PC-3 (cell line): ENCODE measurements at regions of chr16 and their contacts with region 1.

Region 1: GRCh38 chr16:65117811-65118448 is 3.9 kb downstream of the CDH11 start:
- DNase-seq: peak; percentile 75
- ATAC-seq: peak; percentile 9; the same call in 1 of the 2 replicates
- H3K4me3 ChIP-seq: peak overlapping the region; percentile 90
- H3K27ac ChIP-seq: no peak overlapping the region
- H3K4me1 ChIP-seq: peaks cover 22% of the 10 kb centered on the region
- H3K27me3 ChIP-seq: no peaks in the 10 kb centered on the region
- CTCF ChIP-seq: peak; percentile 89

Region 2: GRCh38 chr16:63461248-63461841 is 1656.6 kb before region 1 on chr16:
- CTCF ChIA-PET with region 1: no interaction called
- POLR2A ChIA-PET with region 1: no interaction called
- intact Hi-C with region 1: loop called (anchors 5 kb)
- DNase-seq: peak; percentile 59
- ATAC-seq: no peak; the same call in 1 of the 2 replicates
- H3K4me3 ChIP-seq: no peak overlapping the region
- H3K27ac ChIP-seq: no peak overlapping the region
- H3K4me1 ChIP-seq: no peaks in the 10 kb centered on the region
- H3K27me3 ChIP-seq: no peaks in the 10 kb centered on the region
- CTCF ChIP-seq: peak; percentile 57

Region 3: DNA sequence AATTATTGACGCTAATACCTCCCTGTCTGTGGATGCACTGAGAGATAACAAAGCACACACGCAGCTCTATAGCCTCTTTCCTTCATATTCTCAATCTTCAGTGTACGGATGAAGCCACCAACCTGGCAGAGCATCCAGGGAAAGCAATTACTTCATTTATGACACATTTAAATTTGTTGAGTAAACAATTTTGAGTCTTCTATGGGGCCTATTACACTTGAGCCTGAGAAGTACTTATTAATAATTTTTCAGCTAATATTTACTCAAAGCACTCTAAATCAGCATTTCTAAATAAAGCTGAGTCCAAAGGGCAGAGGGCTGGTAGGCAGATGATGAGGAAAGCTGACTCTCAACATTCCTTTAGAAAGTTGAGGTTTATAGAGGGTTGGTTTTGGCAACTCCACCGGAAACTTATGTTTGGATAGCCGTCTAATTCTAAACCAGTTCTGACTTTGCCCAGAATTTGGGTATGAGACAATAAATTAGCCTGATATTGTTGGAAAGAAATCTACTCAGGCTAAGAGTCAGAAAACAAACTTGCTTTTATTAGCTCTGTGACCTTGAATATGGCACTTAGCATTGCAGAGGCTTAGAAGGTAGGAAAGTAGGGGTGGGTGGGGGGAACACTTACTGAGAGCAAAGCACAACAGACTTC is 639.6 kb before region 1 on chr16:
- CTCF ChIA-PET with region 1: no interaction called
- POLR2A ChIA-PET with region 1: no interaction called
- intact Hi-C with region 1: loop called (anchors 10 kb)
- DNase-seq: peak; percentile 89
- ATAC-seq: peak; percentile 93
- H3K4me3 ChIP-seq: no peak overlapping the region
- H3K27ac ChIP-seq: peak overlapping the region; percentile 69
- H3K4me1 ChIP-seq: peaks cover 20% of the 10 kb centered on the region
- H3K27me3 ChIP-seq: 0 out of 2 replicates have a peak, but pooled peaks cover 2% of the 10 kb centered on the region
- CTCF ChIP-seq: no peak

Region 4: DNA sequence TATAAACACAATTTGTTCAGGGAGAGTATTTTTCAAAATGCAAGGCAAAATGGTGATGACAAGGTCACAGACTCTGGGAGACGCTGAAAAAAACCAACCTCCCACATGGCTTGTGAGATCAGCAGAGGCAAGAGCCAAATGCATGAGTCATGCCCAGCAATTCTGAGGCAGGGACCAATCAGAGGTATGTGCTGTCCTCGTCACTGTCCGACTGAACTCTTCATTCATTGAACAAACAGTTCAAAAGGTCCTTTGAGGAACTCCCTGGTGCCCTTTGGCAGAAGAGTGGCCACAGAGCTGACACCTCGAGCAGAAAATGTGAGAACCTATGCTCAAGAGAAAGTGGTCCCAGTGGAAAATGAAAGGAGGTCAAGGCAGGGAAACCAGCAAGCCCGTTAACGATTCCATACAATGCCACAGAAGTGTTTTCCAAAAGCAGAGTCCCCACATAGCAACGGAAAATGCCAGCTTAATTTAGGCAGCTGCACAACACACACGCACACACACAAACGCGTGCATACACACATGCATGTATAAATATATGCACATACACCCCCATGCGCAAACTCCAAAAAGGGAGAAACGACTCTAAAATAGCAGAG is 47.0 kb before region 1 on chr16:
- CTCF ChIA-PET with region 1: no interaction called
- POLR2A ChIA-PET with region 1: no interaction called
- intact Hi-C with region 1: loop called (anchors 5 kb)
- DNase-seq: peak; percentile 90
- ATAC-seq: peak; percentile 78
- H3K4me3 ChIP-seq: peak overlapping the region; percentile 39; the same call in 1 of the 2 replicates
- H3K27ac ChIP-seq: peak overlapping the region; percentile 92
- H3K4me1 ChIP-seq: peaks cover 40% of the 10 kb centered on the region
- H3K27me3 ChIP-seq: no peaks in the 10 kb centered on the region
- CTCF ChIP-seq: no peak

Region 5: DNA sequence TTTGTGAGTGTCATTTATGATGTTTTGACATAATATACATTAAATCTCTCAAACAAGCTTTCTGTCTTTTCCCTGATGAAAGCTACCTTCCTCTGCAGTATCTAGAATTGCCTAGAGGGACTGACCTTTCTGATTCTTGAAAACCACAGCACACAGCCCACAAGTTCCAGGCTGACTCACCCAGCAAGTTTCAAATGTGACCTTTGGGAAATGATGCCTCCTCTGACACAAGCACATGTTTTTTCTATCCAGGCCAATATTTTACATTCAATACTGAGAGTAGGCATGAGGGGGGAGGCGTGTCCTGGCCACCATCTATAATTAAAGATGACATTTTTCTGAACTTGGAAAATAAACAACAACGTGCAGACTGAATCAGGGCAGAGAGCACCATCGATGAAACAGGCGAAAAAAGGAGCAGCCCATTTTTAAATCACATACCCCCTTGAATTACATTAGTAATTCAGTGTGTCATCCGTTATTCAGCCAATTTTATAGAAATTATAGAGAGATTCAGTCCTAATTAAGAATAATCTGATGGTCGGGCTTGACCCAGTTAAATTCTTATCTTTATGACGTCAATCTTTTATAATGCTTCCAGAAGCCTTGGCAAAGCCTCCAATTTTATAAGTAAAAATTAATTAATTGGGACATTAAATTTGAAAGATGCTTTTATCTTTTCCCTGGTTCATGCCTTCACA is 296.5 kb after region 1 on chr16:
- CTCF ChIA-PET with region 1: no interaction called
- POLR2A ChIA-PET with region 1: no interaction called
- intact Hi-C with region 1: loop called (anchors 2 kb)
- DNase-seq: peak; percentile 90
- ATAC-seq: peak; percentile 62
- H3K4me3 ChIP-seq: no peak overlapping the region; the same call in 1 of the 2 replicates
- H3K27ac ChIP-seq: peak overlapping the region; percentile 93
- H3K4me1 ChIP-seq: peaks cover 57% of the 10 kb centered on the region
- H3K27me3 ChIP-seq: no peaks in the 10 kb centered on the region
- CTCF ChIP-seq: no peak

Region 6: GRCh38 chr16:65658349-65658748 is 540.4 kb after region 1 on chr16:
- CTCF ChIA-PET with region 1: interaction called, 5 read pairs
- POLR2A ChIA-PET with region 1: no interaction called
- intact Hi-C with region 1: loop called (anchors 5 kb)
- DNase-seq: peak; percentile 92
- ATAC-seq: peak; percentile 80
- H3K4me3 ChIP-seq: peak overlapping the region; percentile 51
- H3K27ac ChIP-seq: peak overlapping the region; percentile 99
- H3K4me1 ChIP-seq: peaks cover 43% of the 10 kb centered on the region
- H3K27me3 ChIP-seq: no peaks in the 10 kb centered on the region
- CTCF ChIP-seq: no peak

Region 7: GRCh38 chr16:66270333-66270927 is 1152.5 kb after region 1 on chr16:
- CTCF ChIA-PET with region 1: no interaction called
- POLR2A ChIA-PET with region 1: no interaction called
- intact Hi-C with region 1: loop called (anchors 5 kb)
- DNase-seq: peak; percentile 70
- ATAC-seq: peak; percentile 68
- H3K4me3 ChIP-seq: peak overlapping the region; percentile 46; the same call in 1 of the 2 replicates
- H3K27ac ChIP-seq: peak overlapping the region; percentile 59
- H3K4me1 ChIP-seq: peaks cover 33% of the 10 kb centered on the region
- H3K27me3 ChIP-seq: no peaks in the 10 kb centered on the region
- CTCF ChIP-seq: peak; percentile 74